Head of caudate nucleus (tissue), 42 donors: ENCODE measurements at regions of chr4 and their contacts with region 1.

Region 1: GRCh38 chr4:54384563-54384962 is 155.5 kb downstream of the PDGFRA start:
- DNase-seq: peak; percentile 19 to 85 (median 60)

Region 2: DNA sequence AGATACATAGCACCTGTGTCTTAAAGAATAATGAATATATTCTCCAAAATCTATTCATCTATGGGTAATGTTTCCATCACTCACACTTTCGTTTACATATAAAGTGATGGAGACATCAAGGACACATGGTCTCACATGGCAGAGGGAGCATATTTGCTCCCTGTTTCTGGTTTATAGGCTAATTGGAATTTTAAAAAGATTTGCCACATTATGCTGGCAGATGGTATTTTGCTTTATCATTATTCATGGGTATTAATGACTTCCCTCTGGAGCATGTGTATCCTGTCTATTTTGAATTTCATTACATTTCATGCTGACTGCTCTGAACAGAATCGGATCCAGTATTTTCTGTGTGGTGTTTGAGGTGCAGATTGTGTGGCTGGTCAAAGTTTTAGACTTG is 76.5 kb before region 1 on chr4:
- intact Hi-C with region 1: no loop called
- DNase-seq: no peak

Region 3: DNA sequence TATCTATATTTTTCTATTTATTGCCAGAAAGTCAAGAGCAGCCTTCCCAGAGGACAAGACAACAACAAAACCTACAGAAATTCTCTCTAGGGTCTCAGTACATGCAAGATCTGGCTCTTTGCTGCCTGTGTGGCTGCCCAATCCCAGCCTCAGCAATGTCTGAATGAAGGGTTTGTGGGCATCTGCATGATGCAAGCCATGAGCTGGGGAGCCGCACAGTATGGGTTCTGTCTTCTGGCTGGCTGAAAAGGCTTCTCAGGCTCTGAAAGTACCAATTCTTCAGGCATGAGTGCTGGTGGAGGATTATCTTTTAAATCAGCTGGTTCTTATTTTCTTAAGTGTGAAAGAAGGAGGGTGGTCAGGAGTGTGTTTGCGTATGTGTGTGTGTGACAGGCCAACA is 50.9 kb before region 1 on chr4:
- intact Hi-C with region 1: loop called (anchors 10 kb)
- DNase-seq: peak; percentile 14 to 87 (median 68)

Region 4: DNA sequence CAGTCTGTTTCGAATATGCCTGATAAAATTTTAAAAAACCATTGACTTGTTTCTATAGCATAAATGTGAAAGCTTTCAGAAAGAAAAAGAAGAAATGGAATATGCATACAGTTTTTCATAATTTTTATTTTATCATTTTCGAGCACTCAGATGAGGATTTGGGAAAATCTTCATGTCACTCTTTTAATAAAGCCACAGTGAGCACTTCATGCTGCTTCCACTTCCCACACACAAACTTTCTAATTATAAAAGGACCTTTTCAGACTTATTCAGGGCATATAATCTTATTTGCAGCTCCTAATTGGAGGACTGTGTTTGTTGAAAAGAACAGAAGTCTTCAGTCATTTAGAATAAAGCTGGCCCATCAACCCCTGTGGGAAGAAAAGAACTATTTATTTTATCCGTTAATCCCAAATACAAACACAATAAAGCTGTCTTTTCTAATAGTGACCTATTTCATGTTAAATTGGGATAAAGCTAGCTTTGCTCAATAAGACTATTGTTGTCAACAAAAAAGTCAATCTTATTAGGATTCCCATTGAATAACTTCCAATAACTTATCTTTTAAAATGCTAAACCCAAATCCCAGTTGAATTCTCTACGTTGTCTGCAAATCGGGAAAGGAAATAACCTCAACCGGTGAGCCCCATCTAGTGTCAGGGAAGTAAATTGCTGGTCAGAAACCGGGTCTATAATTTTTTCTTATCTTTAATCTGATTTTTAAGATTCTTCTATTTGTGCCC is 56.0 kb after region 1 on chr4:
- intact Hi-C with region 1: loop called (anchors 5 kb)
- DNase-seq: peak in 35 of 42 donors; percentile 14 to 82 (median 51)